Prostate gland (tissue), 2 donors: ENCODE measurements at regions of chrX and their contacts with region 1.

Region 1: DNA sequence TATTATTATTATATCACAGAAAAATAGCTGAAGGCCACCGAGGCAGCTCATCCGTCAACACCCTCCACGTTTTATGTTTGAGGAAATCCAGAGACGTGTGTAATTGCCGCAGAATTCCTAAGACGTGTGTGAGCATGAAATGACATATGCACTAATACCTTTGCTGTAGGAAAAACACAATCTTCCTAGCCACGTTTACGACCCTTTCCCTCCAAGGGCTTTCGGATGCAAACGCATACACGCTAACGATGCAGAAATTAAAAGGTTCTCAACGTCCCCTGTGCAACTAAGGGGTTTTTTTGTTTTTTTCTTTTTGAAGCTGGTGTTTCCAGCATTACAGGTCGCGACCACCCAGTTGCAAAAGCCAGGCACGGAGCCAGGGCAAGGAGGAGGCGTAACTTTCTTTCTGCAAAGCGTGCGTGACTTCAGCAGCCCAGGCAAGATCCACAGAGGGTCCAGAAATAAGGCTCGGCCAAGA is 33.8 kb downstream of the CRLF2 start:
- DNase-seq: no peak
- H3K4me3 ChIP-seq: no peak overlapping the region
- H3K27ac ChIP-seq: no peak overlapping the region
- H3K4me1 ChIP-seq: no peaks in the 10 kb centered on the region
- H3K27me3 ChIP-seq: no peaks in the 10 kb centered on the region
- CTCF ChIP-seq: no peak
- POLR2A ChIP-seq: no peak

Region 2: GRCh38 chrX:952816-953215 is 225.8 kb before region 1 on chrX:
- intact Hi-C with region 1: loop called (anchors 10 kb)
- DNase-seq: no peak
- H3K4me3 ChIP-seq: no peak overlapping the region
- H3K27ac ChIP-seq: no peak overlapping the region
- H3K4me1 ChIP-seq: no peaks in the 10 kb centered on the region
- H3K27me3 ChIP-seq: no peaks in the 10 kb centered on the region
- CTCF ChIP-seq: no peak
- POLR2A ChIP-seq: no peak